Activated CD8-positive, alpha-beta T cell treated with anti-CD3 and anti-CD28 coated beads for 36 hours (primary cell): ENCODE measurements at regions of chr4 and their contacts with region 1.

Region 1: GRCh38 chr4:119207051-119207450 is 5.5 kb upstream of the USP53 start:
- DNase-seq: no peak
- ATAC-seq: no peak
- H3K4me3 Mint-ChIP-seq: no peak overlapping the region
- H3K27ac Mint-ChIP-seq: peak overlapping the region; percentile 72
- H3K4me1 Mint-ChIP-seq: peaks cover 58% of the 10 kb centered on the region
- H3K27me3 Mint-ChIP-seq: no peaks in the 10 kb centered on the region
- CTCF ChIP-seq: no peak

Region 2: DNA sequence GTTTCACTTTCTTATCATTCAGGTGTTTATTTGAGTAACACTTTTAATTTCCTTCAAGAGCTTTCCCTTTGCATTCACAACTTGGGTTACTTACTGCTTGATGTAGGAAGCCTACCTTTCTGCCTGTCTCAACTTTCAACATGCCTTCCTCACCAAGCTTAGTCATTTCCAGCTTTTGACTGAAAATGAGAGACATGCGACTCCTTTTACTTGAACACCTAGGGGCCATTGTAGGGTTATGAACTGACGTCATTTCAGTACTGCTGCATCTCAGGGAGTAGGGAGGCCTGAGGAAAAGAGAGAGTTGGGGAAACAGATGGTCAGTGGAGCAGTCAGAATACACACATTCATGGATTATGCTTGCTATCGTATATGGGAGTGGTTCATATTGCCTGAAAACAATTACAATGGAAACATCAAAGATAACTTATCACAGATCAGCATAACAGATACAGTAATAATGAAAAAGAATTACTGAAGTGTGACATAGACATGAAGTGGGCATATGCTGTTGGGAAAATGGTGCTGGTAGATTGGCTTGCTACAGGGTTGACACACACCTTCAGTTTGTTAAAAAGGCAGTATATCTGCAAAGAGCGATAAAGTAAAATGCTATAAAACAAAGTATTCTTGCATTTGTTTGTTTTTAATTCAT is 31.1 kb after region 1 on chr4:
- CTCF ChIA-PET with region 1: interaction called, 12 read pairs
- POLR2A ChIA-PET with region 1: interaction called, 22 read pairs
- intact Hi-C with region 1: no loop called
- DNase-seq: peak; percentile 47
- ATAC-seq: peak; percentile 96
- H3K4me3 Mint-ChIP-seq: no peak overlapping the region
- H3K27ac Mint-ChIP-seq: peak overlapping the region; percentile 91
- H3K4me1 Mint-ChIP-seq: peaks cover 52% of the 10 kb centered on the region
- H3K27me3 Mint-ChIP-seq: no peaks in the 10 kb centered on the region
- CTCF ChIP-seq: no peak

Region 3: DNA sequence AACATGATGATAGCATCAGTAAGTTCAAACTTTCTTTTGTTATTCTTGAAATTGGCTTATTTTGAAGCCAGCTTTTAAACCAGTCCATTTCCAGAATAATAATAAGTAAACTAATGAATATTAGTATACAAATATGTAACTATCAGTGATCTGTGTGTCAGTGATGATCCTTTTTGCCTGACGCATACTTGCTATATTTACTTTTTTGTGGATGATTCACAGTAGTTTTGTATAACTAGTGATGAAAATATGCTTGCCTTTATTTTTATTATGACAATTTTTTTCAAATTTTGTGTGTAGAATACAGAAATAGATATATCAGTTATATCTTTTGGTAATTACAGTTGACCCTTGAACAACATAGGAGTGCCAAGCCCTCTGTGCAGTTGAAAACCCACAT is 54.9 kb after region 1 on chr4:
- CTCF ChIA-PET with region 1: no interaction called
- POLR2A ChIA-PET with region 1: no interaction called
- intact Hi-C with region 1: no loop called
- DNase-seq: no peak
- ATAC-seq: no peak
- H3K4me3 Mint-ChIP-seq: no peak overlapping the region
- H3K27ac Mint-ChIP-seq: no peak overlapping the region
- H3K4me1 Mint-ChIP-seq: peaks cover 13% of the 10 kb centered on the region
- H3K27me3 Mint-ChIP-seq: no peaks in the 10 kb centered on the region
- CTCF ChIP-seq: no peak